Activated B cell treated with CpG ODN at 0.5 μM for 24 hours (primary cell): ENCODE measurements at regions of chr4 and their contacts with region 1.

Region 1: GRCh38 chr4:73193155-73193554 is 65.4 kb downstream of the ANKRD17 start:
- DNase-seq: no peak
- ATAC-seq: peak; percentile 56
- H3K4me3 Mint-ChIP-seq: peak overlapping the region; percentile 53
- H3K27ac Mint-ChIP-seq: peak overlapping the region; percentile 19
- H3K4me1 Mint-ChIP-seq: peaks cover 32% of the 10 kb centered on the region
- H3K27me3 Mint-ChIP-seq: no peaks in the 10 kb centered on the region
- CTCF ChIP-seq: no peak

Region 2: DNA sequence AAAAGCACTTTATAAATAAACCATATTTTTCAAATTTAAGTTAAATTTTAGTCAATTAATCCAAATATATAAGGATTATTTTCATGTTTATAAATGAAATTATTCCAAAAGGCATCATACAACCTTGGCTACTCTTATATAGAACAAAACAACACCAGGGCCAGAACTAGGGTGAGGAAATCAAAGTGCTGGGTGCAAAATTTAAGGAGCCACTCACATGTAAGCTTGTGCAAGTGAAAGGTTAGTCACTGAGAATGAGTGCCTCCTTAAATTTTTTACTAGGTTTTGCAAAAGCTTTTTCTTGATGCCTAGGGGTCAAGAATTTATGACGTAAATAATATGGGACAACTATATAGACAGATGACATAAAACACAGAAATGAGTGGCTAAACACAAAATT is 40.3 kb before region 1 on chr4:
- CTCF ChIA-PET with region 1: no interaction called
- POLR2A ChIA-PET with region 1: no interaction called
- intact Hi-C with region 1: loop called (anchors 5 kb)
- DNase-seq: no peak
- ATAC-seq: no peak
- H3K4me3 Mint-ChIP-seq: no peak overlapping the region
- H3K27ac Mint-ChIP-seq: no peak overlapping the region
- H3K4me1 Mint-ChIP-seq: no peaks in the 10 kb centered on the region
- H3K27me3 Mint-ChIP-seq: no peaks in the 10 kb centered on the region
- CTCF ChIP-seq: no peak

Region 3: GRCh38 chr4:73161527-73162185 is 31.5 kb before region 1 on chr4:
- CTCF ChIA-PET with region 1: no interaction called
- POLR2A ChIA-PET with region 1: no interaction called
- intact Hi-C with region 1: loop called (anchors 5 kb)
- DNase-seq: no peak
- ATAC-seq: no peak
- H3K4me3 Mint-ChIP-seq: no peak overlapping the region
- H3K27ac Mint-ChIP-seq: no peak overlapping the region
- H3K4me1 Mint-ChIP-seq: no peaks in the 10 kb centered on the region
- H3K27me3 Mint-ChIP-seq: no peaks in the 10 kb centered on the region
- CTCF ChIP-seq: no peak

Region 4: GRCh38 chr4:73181231-73181630 is 11.9 kb before region 1 on chr4:
- CTCF ChIA-PET with region 1: no interaction called
- POLR2A ChIA-PET with region 1: no interaction called
- intact Hi-C with region 1: loop called (anchors 1 kb)
- DNase-seq: no peak
- ATAC-seq: peak; percentile 54
- H3K4me3 Mint-ChIP-seq: peak overlapping the region; percentile 5
- H3K27ac Mint-ChIP-seq: peak overlapping the region; percentile 14
- H3K4me1 Mint-ChIP-seq: peaks cover 44% of the 10 kb centered on the region
- H3K27me3 Mint-ChIP-seq: no peaks in the 10 kb centered on the region
- CTCF ChIP-seq: no peak

Region 5: GRCh38 chr4:73208376-73208775 is 15.2 kb after region 1 on chr4:
- CTCF ChIA-PET with region 1: no interaction called
- POLR2A ChIA-PET with region 1: no interaction called
- intact Hi-C with region 1: no loop called
- DNase-seq: no peak
- ATAC-seq: no peak
- H3K4me3 Mint-ChIP-seq: no peak overlapping the region
- H3K27ac Mint-ChIP-seq: no peak overlapping the region
- H3K4me1 Mint-ChIP-seq: peaks cover 37% of the 10 kb centered on the region
- H3K27me3 Mint-ChIP-seq: no peaks in the 10 kb centered on the region
- CTCF ChIP-seq: no peak

Region 6: DNA sequence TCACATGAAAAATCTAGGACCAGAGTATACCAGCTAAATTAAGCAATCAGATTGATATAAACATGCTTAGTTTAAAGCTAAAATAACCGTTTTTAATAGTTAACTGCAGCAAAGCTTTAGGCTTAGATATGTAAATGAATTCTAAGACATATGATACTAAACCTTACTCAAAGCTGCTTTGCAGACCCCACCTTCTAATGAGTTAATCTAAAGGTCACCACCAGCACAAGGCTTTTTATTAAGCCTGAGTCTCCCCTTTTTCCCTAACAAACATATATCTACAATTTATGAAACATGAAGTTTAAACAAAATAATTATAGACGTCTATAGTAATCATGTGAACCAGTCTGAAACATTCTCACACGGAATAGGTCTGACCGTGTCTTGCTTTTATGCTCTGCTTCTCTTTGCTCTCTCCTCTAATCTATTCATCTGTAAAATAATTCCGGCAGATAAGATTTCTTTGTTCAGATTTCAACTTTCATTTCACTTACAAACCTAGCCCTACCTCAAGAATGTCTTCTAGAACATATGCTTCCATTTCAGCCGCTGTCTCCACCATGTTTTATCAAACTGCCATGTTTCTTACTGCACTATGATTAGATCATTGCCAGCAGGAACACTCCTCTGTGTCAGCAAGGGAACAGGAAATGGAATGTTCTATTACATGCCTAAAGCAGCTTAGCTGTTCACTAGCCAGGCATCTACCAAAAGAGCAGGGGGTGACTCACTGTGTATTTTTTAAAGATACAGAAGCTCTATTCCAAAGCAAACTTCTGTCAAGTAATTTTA is 29.5 kb after region 1 on chr4:
- CTCF ChIA-PET with region 1: no interaction called
- POLR2A ChIA-PET with region 1: interaction called, 12 read pairs
- intact Hi-C with region 1: loop called (anchors 2 kb)
- DNase-seq: no peak
- ATAC-seq: peak; percentile 98
- H3K4me3 Mint-ChIP-seq: no peak overlapping the region
- H3K27ac Mint-ChIP-seq: no peak overlapping the region
- H3K4me1 Mint-ChIP-seq: peaks cover 37% of the 10 kb centered on the region
- H3K27me3 Mint-ChIP-seq: no peaks in the 10 kb centered on the region
- CTCF ChIP-seq: no peak

Region 7: DNA sequence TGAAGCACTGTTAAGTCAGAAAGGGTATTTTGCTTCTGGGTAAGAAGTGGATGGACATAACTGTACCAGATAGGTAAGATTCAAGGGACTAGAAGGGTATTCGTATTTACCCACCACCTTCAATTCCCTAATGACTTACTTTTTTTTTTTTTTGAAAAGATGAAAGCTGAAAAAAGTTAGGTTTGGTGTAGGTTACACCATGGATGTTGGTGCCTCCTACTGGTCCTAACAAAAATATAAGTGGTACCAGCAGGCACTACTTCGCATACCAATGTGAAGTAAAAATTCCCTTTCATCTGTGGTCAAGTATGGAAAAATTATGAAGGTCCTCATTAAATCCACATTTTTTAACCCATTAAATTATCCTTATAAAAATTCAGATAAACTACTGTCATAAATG is 58.2 kb after region 1 on chr4:
- CTCF ChIA-PET with region 1: no interaction called
- POLR2A ChIA-PET with region 1: no interaction called
- intact Hi-C with region 1: no loop called
- DNase-seq: no peak
- ATAC-seq: no peak
- H3K4me3 Mint-ChIP-seq: no peak overlapping the region
- H3K27ac Mint-ChIP-seq: no peak overlapping the region
- H3K4me1 Mint-ChIP-seq: peaks cover 53% of the 10 kb centered on the region
- H3K27me3 Mint-ChIP-seq: no peaks in the 10 kb centered on the region
- CTCF ChIP-seq: no peak